Prostate gland (tissue), 2 donors: ENCODE measurements at regions of chr11 and their contacts with region 1.

Region 1: DNA sequence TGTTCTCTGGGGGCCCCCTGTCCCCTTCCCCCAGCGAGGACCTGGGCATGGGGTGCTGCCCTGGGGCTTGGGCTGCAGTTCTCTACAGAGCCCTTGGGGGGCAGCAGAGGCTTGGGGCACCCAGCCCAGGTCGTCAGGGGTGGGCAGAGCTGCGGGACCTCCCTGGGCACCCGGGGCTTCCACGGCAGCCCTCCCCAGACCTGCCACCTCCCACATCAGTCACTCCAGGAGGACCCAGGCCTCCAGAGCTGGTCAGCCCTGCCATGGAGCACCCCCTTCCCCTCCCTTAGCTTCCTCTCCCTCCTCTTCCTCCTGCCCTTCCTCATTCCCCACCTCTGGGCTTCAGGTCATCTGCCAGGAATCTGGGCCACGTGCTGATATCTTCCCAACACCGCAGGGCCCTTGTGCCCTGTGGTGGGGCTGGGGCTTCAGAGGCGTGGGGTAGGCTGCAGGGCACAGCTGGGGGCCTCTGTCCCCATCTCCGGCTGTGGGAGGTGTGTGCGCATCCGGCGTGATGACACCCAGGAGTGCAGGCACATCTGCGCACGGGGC is 5.8 kb downstream of the TSPAN4 start:
- DNase-seq: no peak
- H3K4me3 ChIP-seq: no peak overlapping the region
- H3K27ac ChIP-seq: no peak overlapping the region
- H3K4me1 ChIP-seq: peaks cover 26% of the 10 kb centered on the region
- H3K27me3 ChIP-seq: no peaks in the 10 kb centered on the region
- CTCF ChIP-seq: peak; percentile 40 to 91 (median 78)
- POLR2A ChIP-seq: no peak

Region 2: GRCh38 chr11:798093-798713 is 50.3 kb before region 1 on chr11 and contains the start of gene SLC25A22:
- intact Hi-C with region 1: no loop called
- DNase-seq: peak; percentile 64
- H3K4me3 ChIP-seq: peak within 1 kb of the TSS; percentile 47 to 73
- H3K27ac ChIP-seq: peak within 1 kb of the TSS; percentile 81 to 86
- H3K4me1 ChIP-seq: peaks cover 16% of the 10 kb centered on the region
- H3K27me3 ChIP-seq: no peaks in the 10 kb centered on the region
- CTCF ChIP-seq: peak; percentile 65 to 95 (median 88)
- POLR2A ChIP-seq: no peak
- total RNA-seq, gene SLC25A22: 21.2 to 43.2 TPM

Region 3: DNA sequence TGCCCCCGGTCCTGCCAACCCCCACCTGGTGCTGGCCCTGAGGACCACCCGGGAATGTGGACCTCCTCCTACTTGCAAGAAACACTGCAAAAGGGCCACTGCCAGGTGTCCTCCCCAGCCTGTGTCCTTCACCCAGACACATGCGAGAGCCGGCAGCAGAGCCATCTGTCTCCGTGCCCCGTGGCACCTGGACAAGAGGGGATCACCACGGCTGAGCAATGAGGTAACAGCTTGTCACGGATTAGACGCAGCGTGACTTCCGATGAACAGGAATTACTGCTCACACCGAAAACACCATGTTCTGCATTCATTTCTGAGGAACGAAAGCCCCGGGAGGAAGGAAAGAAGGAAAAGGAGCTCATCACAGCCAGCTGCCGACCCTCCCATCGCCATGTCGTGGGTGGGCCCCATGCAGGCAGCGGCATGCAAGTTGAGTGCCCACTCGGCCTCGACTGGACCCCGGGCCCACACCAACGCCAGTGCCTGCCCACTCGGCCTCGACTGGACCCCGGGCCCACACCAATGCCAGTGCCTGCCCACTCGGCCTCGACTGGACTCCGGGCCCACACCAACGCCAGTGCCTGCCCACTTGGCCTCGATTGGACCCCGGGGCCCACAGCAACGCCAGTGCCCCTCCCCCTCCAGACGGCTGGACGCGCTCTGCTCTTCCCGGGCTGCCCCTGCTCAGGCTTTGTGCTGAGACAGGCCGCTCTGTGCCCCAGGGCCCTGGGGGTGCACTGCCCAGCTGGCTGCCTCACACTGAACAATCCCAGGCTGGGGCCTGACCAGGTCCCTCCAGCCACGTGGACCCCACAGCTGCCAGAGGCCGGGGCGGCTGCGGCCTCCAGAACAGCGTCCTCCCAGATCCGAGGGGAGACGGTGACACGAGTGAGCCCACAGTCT is 40.1 kb after region 1 on chr11:
- intact Hi-C with region 1: no loop called
- DNase-seq: no peak
- H3K4me3 ChIP-seq: no peak overlapping the region
- H3K27ac ChIP-seq: no peak overlapping the region
- H3K4me1 ChIP-seq: no peaks in the 10 kb centered on the region
- H3K27me3 ChIP-seq: no peaks in the 10 kb centered on the region
- CTCF ChIP-seq: no peak
- POLR2A ChIP-seq: no peak

Region 4: GRCh38 chr11:910589-911195 is 62.2 kb after region 1 on chr11 and contains the start of gene CHID1:
- intact Hi-C with region 1: loop called (anchors 5 kb)
- DNase-seq: peak; percentile 84
- H3K4me3 ChIP-seq: peak within 1 kb of the TSS; percentile 86 to 90
- H3K27ac ChIP-seq: peak within 1 kb of the TSS; percentile 88
- H3K4me1 ChIP-seq: no peaks in the 10 kb centered on the region
- H3K27me3 ChIP-seq: no peaks in the 10 kb centered on the region
- CTCF ChIP-seq: no peak
- POLR2A ChIP-seq: peak; percentile 5
- total RNA-seq, gene CHID1: 107 to 145 TPM

Region 5: GRCh38 chr11:925496-926321 is 77.3 kb after region 1 on chr11 and contains the start of gene AP2A2:
- intact Hi-C with region 1: loop called (anchors 5 kb)
- DNase-seq: peak; percentile 82
- H3K4me3 ChIP-seq: peak within 1 kb of the TSS; percentile 93 to 98
- H3K27ac ChIP-seq: peak within 1 kb of the TSS; percentile 80 to 93
- H3K4me1 ChIP-seq: no peaks in the 10 kb centered on the region
- H3K27me3 ChIP-seq: no peaks in the 10 kb centered on the region
- CTCF ChIP-seq: peak; percentile 70 to 97 (median 88)
- POLR2A ChIP-seq: peak; percentile 69
- total RNA-seq, gene AP2A2: 35.1 to 70.2 TPM

Region 6: GRCh38 chr11:975827-976226 is 127.4 kb after region 1 on chr11:
- intact Hi-C with region 1: loop called (anchors 5 kb)
- DNase-seq: no peak
- H3K4me3 ChIP-seq: no peak overlapping the region
- H3K27ac ChIP-seq: no peak overlapping the region
- H3K4me1 ChIP-seq: peaks cover 2% of the 10 kb centered on the region
- H3K27me3 ChIP-seq: no peaks in the 10 kb centered on the region
- CTCF ChIP-seq: no peak
- POLR2A ChIP-seq: no peak

Region 7: GRCh38 chr11:1050581-1051355 is 202.3 kb after region 1 on chr11:
- intact Hi-C with region 1: loop called (anchors 2 kb)
- DNase-seq: peak; percentile 78
- H3K4me3 ChIP-seq: no peak overlapping the region
- H3K27ac ChIP-seq: no peak overlapping the region
- H3K4me1 ChIP-seq: peaks cover 23% of the 10 kb centered on the region
- H3K27me3 ChIP-seq: no peaks in the 10 kb centered on the region
- CTCF ChIP-seq: peak; percentile 91 to 99 (median 96)
- POLR2A ChIP-seq: no peak